ENCODE measurements at regions of chr15 and their contacts with region 1.

Region 1: DNA sequence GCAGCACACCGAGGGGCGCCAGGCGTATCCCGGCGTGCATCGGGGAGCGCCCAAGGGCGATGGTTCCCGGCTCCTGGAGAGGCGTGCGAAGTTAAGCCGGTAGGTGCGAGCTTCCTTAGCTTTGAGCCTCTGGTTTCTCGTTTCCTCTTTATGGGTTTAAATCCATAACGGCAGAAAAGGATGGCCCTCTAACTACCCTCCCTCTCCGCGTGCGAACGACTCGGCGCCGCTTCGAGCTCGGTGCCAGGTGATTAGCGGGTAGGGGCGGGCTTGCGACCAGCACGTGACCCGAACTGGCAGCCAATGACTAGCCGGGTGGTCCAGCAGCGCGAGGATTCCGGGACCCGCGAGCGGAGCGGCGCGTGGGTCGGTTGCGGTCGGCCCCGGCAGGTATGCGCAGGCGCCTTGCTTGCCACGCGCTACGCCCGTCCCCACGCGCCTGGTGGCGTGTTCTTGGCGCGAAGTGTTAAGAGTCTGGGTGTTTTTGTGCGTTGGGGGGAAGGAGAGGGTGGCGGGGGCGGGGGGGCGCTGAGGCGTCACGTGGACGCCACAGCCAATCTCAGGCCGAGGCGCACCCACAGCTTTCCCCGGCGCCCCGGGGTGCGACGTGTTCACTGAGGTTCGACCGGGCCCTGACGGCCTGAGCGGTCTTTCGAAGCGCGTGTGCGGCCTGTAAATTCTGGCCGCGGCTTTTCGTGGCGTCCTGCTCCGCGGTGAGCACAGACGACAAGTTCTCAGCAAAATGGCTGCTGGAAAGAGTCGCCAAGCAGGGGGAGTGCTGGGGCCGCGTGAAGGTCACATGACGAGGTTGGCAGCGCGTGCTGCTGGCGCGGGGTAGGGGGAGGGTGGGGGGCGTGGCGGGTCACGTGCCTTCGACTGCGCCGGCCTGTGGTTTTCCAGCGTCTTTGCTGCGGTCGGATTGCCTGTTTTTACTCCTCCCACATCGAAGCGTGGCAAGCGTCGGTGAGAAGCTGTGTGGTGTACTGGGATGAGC is 38.7 kb upstream of the MGA start:
- DNase-seq: peak; percentile 86
- ATAC-seq: peak; percentile 89

Region 2: DNA sequence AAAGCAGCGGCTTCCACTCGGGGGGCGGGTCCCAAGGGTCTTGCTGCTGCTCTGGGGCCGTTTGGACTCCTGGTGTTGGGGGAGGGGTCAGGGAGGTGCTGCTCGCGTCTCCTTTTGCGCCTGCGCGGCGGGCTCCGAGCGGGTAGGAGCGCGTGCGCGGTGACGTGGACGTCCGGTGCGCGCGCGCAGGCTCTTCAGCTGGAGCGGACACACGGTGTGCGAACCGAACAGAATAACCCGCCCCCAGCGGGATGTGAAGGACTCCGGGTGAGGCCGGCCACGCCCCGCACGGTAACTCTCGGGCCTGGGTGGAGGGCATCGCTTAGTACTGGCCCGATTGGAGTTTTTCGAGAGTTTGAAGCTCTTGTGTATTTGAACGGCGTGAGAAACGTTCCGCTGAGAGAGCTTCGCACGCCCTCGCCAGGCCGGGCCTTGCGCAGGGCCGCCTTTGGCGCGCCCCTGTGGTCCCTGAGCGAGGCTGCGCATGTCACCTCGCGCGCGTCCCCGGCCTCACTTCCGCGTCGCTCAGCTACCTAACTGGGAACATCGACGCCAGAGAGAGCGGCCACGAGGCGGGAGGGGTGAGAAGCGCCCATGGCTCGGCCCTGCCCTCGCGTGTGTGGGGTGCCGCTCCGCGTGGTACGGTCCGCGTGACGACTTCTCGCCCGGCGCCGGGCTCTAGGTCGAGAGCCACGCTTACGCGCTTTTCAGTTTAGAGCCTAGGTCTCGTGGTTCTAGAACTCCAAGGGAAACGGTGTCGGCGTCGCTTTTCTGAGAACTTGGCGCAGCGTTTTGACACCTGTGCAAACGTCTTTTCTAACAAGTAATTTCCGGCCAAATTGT is 39.0 kb after region 1 on chr15 and contains the start of gene MGA:
- intact Hi-C with region 1: loop called (anchors 1 kb)
- DNase-seq: peak; percentile 97
- ATAC-seq: peak; percentile 94
- total RNA-seq, gene MGA: 30.2 TPM

Measured in Right ventricle myocardium inferior (tissue), 1 donor.